ENCODE measurements at regions of chr9 and their contacts with region 1.

Region 1: GRCh38 chr9:97710356-97711222 is 13.4 kb upstream of the XPA start:
- DNase-seq: peak; percentile 37
- H3K4me3 ChIP-seq: no peak overlapping the region
- H3K27ac ChIP-seq: no peak overlapping the region
- H3K4me1 ChIP-seq: no peaks in the 10 kb centered on the region
- H3K27me3 ChIP-seq: no peaks in the 10 kb centered on the region
- CTCF ChIP-seq: peak; percentile 88

Region 2: DNA sequence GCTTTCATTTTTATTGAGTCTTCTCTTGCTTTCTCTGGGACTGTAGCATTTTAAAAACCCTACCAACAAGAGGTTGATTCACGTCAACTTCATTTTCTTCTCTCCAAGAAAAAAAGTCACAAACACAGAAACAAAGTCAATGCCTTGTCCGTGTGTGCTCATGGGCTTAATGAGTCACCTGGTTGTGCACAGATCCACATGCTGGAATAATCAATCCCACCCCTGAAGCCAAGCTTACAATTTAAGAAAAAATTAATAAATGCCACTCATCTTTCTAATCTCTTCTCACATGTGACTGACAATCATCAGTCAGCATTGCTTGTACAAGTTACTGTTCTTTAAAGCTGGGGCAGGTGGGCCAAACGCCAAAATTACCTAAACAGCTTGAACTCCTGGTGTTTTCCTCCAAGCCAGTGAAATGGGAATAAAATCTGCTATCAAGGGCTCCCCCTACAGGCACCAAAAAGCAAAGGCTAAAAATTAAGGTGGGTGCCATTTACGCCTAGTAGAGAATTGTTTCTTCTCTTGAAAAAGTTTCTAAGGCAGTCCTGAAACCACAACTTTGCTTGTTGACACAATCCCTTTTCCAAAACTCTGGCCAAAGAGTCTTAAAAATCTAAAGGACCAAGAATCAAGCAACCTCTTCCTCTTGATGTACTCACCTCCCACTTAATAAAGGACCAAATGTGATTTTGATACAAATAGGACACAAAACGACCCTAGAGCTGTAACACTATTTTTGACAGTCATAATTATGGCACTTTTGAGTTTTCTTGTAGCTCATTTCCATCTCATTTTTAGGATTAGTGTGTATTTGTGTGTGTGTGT is 190.4 kb after region 1 on chr9:
- intact Hi-C with region 1: loop called (anchors 5 kb)
- DNase-seq: no peak
- H3K4me3 ChIP-seq: no peak overlapping the region
- H3K27ac ChIP-seq: no peak overlapping the region
- H3K4me1 ChIP-seq: no peaks in the 10 kb centered on the region
- H3K27me3 ChIP-seq: no peaks in the 10 kb centered on the region
- CTCF ChIP-seq: peak; percentile 47

Measured in colonic mucosa (tissue), 4 donors.